Left cardiac atrium (tissue), 4 donors: ENCODE measurements at regions of chr1 and their contacts with region 1.

Region 1: GRCh38 chr1:13759088-13759487 is 59.1 kb downstream of the PRDM2 start:
- DNase-seq: no peak
- ATAC-seq: no peak

Region 2: GRCh38 chr1:13550663-13551062 is 208.4 kb before region 1 on chr1:
- intact Hi-C with region 1: no loop called
- DNase-seq: no peak
- ATAC-seq: peak in 1 of 2 donors; percentile 85

Region 3: GRCh38 chr1:13792419-13792818 is 33.3 kb after region 1 on chr1:
- intact Hi-C with region 1: loop called in 1 of 2 experiments (anchors 5 kb)
- DNase-seq: no peak
- ATAC-seq: peak; percentile 61 to 70